PC-3 (cell line): ENCODE measurements at regions of chr5 and their contacts with region 1.

Region 1: DNA sequence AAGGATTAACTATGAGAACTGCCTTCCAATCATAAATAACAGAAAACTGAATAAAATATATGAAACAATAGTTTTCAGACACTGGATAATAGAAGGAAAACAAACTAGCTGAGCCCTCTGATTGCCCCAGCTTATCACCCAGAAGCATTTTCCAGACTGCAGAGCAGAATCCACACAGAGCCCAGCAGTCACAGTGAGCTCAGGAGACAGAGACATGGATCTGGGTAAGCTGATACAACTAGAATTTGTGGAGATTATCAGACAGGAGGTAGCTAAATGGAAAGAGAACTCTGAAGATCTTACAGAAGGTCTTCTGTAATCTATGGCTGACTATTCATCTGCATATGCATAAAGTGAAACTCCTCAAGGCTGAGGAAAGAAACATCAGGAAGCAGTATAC is 128.8 kb downstream of the NR2F1-AS1 start:
- DNase-seq: no peak
- ATAC-seq: no peak
- H3K4me3 ChIP-seq: no peak overlapping the region
- H3K27ac ChIP-seq: no peak overlapping the region
- H3K4me1 ChIP-seq: no peaks in the 10 kb centered on the region
- H3K27me3 ChIP-seq: no peaks in the 10 kb centered on the region
- CTCF ChIP-seq: no peak

Region 2: GRCh38 chr5:93130624-93131490 is 321.4 kb before region 1 on chr5:
- CTCF ChIA-PET with region 1: no interaction called
- POLR2A ChIA-PET with region 1: interaction called, 10 read pairs
- intact Hi-C with region 1: no loop called
- DNase-seq: no peak
- ATAC-seq: no peak
- H3K4me3 ChIP-seq: no peak overlapping the region
- H3K27ac ChIP-seq: no peak overlapping the region
- H3K4me1 ChIP-seq: peaks cover 18% of the 10 kb centered on the region
- H3K27me3 ChIP-seq: no peaks in the 10 kb centered on the region
- CTCF ChIP-seq: no peak